Psoas muscle (tissue), 8 donors: ENCODE measurements at regions of chr1 and their contacts with region 1.

Region 1: DNA sequence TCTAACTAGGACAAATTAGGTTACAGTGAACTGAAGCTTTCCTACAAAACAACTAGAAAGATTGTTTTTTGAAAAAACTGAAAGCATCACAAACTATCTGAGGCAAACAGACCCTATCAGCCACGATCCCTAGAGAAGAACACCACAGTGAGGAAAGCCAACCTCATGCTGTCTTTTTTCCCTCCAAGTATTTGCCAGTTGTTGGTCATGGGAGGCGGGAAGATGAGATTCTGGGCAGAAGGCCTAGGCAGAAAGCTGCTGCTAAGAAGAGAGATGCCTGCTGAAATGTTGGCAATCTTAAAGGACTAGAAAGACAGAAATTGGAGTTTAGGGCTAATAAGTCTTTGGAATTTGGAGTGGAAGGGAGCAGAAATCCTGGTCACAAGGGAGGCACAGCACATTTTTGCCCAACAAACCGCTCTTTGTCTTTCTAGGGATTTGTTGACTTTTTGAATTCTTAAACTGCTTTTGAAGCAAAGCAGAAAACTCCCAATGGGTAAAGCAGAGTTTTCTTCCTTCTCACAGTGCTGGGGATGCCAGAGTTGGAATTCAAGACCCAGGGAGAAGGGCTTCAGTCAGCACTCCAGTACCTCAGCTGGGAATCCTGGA is 83.9 kb downstream of the MT1HL1 start:
- DNase-seq: no peak
- ATAC-seq: no peak
- H3K4me3 ChIP-seq: no peak overlapping the region
- H3K27ac ChIP-seq: no peak overlapping the region
- H3K4me1 ChIP-seq: peaks cover 9% of the 10 kb centered on the region
- H3K27me3 ChIP-seq: no peaks in the 10 kb centered on the region
- CTCF ChIP-seq: no peak

Region 2: GRCh38 chr1:236275586-236275985 is 644.8 kb before region 1 on chr1:
- intact Hi-C with region 1: loop called in 1 of 2 experiments (anchors 10 kb)
- DNase-seq: no peak
- ATAC-seq: no peak
- H3K4me3 ChIP-seq: no peak overlapping the region
- H3K27ac ChIP-seq: no peak overlapping the region
- H3K4me1 ChIP-seq: peaks cover 5% of the 10 kb centered on the region
- H3K27me3 ChIP-seq: no peaks in the 10 kb centered on the region
- CTCF ChIP-seq: no peak